IMR-90 (cell line): ENCODE measurements at regions of chr1 and their contacts with region 1.

Region 1: DNA sequence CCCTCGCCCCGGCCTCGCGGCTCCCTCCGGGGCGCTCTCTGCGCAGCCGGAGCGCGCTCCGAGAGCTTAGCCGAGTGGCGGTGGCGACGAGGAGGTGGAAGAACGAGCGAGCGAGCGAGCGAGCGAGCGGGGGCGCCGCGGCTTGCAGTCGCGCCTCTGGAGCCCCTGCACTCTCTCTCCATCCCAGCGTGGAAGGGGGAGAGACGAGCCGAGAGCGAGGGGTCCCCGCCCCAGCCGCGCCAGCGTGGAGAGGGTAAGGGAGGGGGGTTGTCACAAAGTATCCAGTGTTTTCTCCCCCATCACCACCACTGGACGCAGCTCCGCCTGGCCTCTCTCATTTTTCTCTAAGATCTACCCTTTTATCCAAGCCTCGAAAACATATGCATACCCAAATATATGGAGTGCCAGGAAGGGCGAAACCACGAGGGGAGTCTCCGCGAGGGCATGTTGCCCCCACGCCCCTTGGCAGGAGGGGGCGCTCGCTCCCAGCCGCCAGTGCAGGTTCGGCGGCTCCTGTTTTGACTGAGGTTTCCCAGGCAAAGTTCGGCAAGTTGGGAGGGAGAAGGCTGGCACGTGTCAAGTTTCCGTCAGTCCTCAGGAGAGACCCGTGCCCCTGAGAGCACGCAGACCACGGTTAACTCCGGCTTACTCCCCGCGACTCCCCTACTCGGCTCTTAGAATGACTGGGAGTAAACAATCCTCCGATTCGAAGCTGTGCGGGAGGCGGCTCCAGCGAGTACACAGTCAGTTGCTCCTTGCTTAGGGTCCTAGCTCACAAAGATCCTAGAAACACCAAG is 569 bp upstream of the DAB1 start:
- DNase-seq: peak; percentile 41
- ATAC-seq: peak; percentile 57
- H3K4me3 ChIP-seq: peak overlapping the region; percentile 54
- H3K27ac ChIP-seq: no peak overlapping the region
- H3K4me1 ChIP-seq: no peaks in the 10 kb centered on the region
- H3K27me3 ChIP-seq: peaks cover 2% of the 10 kb centered on the region; the same call in 1 of the 2 replicates
- CTCF ChIP-seq: peak; percentile 74
- POLR2A ChIP-seq: no peak
- RAD21 ChIP-seq: peak; percentile 72

Region 2: DNA sequence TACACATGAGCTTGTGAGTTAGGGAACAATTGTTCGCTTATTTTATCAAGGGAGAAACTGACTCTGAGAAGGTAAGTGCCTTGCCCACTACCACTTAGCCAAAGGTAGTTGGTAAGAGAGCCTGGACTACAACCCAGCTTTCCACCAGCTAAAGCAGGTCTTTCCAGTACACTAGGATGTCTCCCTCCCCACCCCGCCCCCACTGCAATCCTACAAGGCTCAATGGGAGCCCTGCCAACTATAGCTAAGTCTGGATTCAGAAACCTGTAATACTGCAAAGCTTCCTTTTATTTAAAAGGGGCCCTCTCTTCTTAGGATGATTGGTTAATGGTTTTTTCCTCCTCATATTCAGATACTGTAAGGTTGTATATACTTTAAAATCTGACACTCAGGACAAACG is 356.6 kb before region 1 on chr1:
- CTCF ChIA-PET with region 1: no interaction called
- POLR2A ChIA-PET with region 1: no interaction called
- dilution Hi-C with region 1: no loop called
- in situ Hi-C with region 1: no loop called
- intact Hi-C with region 1: loop called (anchors 5 kb)
- DNase-seq: no peak
- ATAC-seq: no peak
- H3K4me3 ChIP-seq: no peak overlapping the region
- H3K27ac ChIP-seq: no peak overlapping the region
- H3K4me1 ChIP-seq: peaks cover 5% of the 10 kb centered on the region; the same call in 1 of the 2 replicates
- H3K27me3 ChIP-seq: no peaks in the 10 kb centered on the region
- CTCF ChIP-seq: no peak
- POLR2A ChIP-seq: no peak
- RAD21 ChIP-seq: no peak

Region 3: DNA sequence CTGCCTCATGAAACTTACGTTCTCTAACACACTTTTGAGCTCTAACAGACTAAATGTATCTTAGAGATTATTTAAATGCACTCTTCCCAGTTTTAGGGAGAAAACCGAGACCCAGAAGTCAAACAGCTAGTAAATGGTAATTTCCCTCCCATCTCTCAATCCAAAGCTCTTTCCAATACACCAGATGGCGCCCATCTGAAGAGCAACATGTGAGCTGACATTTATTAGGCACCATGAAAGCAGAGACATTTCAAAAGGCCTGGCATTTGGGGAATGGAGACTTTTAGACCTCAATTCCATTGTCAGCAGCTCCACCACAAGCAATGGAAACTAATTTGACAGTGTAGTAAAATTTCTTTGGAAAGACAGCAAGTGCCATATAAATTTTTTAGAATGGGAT is 191.9 kb before region 1 on chr1:
- CTCF ChIA-PET with region 1: no interaction called
- POLR2A ChIA-PET with region 1: no interaction called
- dilution Hi-C with region 1: no loop called
- in situ Hi-C with region 1: no loop called
- intact Hi-C with region 1: no loop called
- DNase-seq: no peak
- ATAC-seq: no peak
- H3K4me3 ChIP-seq: no peak overlapping the region
- H3K27ac ChIP-seq: no peak overlapping the region
- H3K4me1 ChIP-seq: no peaks in the 10 kb centered on the region
- H3K27me3 ChIP-seq: no peaks in the 10 kb centered on the region
- CTCF ChIP-seq: peak; percentile 10; the same call in 1 of the 2 replicates
- POLR2A ChIP-seq: no peak
- RAD21 ChIP-seq: no peak

Region 4: GRCh38 chr1:57770772-57771171 is 346.3 kb after region 1 on chr1:
- CTCF ChIA-PET with region 1: no interaction called
- POLR2A ChIA-PET with region 1: no interaction called
- dilution Hi-C with region 1: no loop called
- in situ Hi-C with region 1: no loop called
- intact Hi-C with region 1: loop called (anchors 5 kb)
- DNase-seq: peak; percentile 4
- ATAC-seq: peak; percentile 48; the same call in 1 of the 2 replicates
- H3K4me3 ChIP-seq: no peak overlapping the region
- H3K27ac ChIP-seq: no peak overlapping the region
- H3K4me1 ChIP-seq: no peaks in the 10 kb centered on the region
- H3K27me3 ChIP-seq: no peaks in the 10 kb centered on the region
- CTCF ChIP-seq: peak; percentile 28; the same call in 1 of the 2 replicates
- POLR2A ChIP-seq: no peak
- RAD21 ChIP-seq: no peak

Region 5: DNA sequence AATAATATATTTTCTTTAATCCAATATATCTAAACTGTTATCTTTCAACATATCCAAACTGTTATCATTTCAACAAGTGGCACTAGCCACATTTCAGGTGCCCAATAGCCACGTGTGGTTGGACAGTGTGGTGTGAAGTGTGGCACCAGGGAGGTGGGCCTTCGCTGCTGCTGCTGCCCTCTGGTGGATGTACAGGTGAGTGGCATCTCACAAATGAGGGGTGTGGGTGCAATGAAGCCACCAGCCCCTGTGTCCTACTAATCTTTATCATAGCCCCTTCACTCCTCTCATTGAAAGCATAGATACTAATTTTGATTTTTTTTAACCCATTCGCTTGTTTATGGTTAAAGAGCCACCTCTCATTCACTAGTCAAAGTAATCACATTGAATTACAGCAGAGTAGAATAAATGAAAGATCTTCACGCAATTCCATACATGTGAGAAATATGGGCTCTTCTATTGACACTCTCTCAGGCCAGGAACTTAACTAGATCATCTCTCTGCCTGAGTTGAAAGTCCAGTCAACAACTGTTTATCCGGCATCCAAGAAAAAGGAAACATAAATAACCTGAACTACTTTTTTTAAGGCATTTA is 622.9 kb after region 1 on chr1:
- CTCF ChIA-PET with region 1: no interaction called
- POLR2A ChIA-PET with region 1: no interaction called
- dilution Hi-C with region 1: no loop called
- in situ Hi-C with region 1: no loop called
- intact Hi-C with region 1: loop called (anchors 1 kb)
- DNase-seq: no peak
- ATAC-seq: peak; percentile 79
- H3K4me3 ChIP-seq: no peak overlapping the region
- H3K27ac ChIP-seq: no peak overlapping the region
- H3K4me1 ChIP-seq: no peaks in the 10 kb centered on the region
- H3K27me3 ChIP-seq: no peaks in the 10 kb centered on the region
- CTCF ChIP-seq: peak; percentile 59
- POLR2A ChIP-seq: no peak
- RAD21 ChIP-seq: peak; percentile 57

Region 6: GRCh38 chr1:58546520-58547308 is 1122.3 kb after region 1 on chr1 and contains the start of gene OMA1:
- CTCF ChIA-PET with region 1: no interaction called
- POLR2A ChIA-PET with region 1: no interaction called
- dilution Hi-C with region 1: no loop called
- in situ Hi-C with region 1: no loop called
- intact Hi-C with region 1: loop called (anchors 10 kb)
- DNase-seq: peak; percentile 98
- ATAC-seq: peak; percentile 97
- H3K4me3 ChIP-seq: peak within 1 kb of the TSS; percentile 73
- H3K27ac ChIP-seq: peak within 1 kb of the TSS; percentile 87
- H3K4me1 ChIP-seq: no peaks in the 10 kb centered on the region; the same call in 1 of the 2 replicates
- H3K27me3 ChIP-seq: peaks cover 9% of the 10 kb centered on the region
- CTCF ChIP-seq: peak; percentile 98
- POLR2A ChIP-seq: peak; percentile 88
- RAD21 ChIP-seq: peak; percentile 89
- total RNA-seq, gene OMA1: 5.9 and 11.9 TPM in 2 replicates